ENCODE measurements at regions of chr1 and their contacts with region 1.

Region 1: GRCh38 chr1:54944610-54945544 is 35.6 kb upstream of the TMEM61 start:
- DNase-seq: peak; percentile 36 to 80 (median 59)
- ATAC-seq: peak; percentile 65
- H3K4me3 ChIP-seq: no peak overlapping the region
- H3K4me3 Mint-ChIP-seq: no peak overlapping the region
- H3K27ac ChIP-seq: no peak overlapping the region
- H3K27ac Mint-ChIP-seq: no peak overlapping the region
- H3K4me1 ChIP-seq: no peaks in the 10 kb centered on the region
- H3K4me1 Mint-ChIP-seq: peaks cover 6% of the 10 kb centered on the region
- H3K27me3 ChIP-seq: no peaks in the 10 kb centered on the region
- H3K27me3 Mint-ChIP-seq: peaks cover 5% of the 10 kb centered on the region
- CTCF ChIP-seq: peak; percentile 76

Region 2: DNA sequence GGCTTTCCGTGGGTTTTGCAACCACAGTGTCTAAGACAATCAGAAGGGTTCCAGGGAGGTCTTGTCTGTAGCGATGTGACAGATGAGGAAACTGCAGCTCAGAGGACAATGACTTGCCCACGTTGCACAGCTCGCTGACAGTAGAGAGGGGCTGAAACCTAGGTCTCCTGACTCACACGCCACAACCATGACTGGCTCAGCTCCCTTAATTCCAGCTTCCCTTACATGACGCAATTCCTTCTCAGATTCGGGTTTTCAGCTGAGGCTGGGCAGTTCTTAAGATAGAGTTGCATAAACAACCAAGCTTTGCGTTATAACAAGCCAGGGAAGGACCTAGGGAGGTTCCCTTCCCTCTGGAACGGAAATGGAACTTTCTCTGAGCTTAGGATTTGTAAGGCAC is 94.1 kb before region 1 on chr1:
- CTCF ChIA-PET with region 1: no interaction called
- POLR2A ChIA-PET with region 1: no interaction called
- intact Hi-C with region 1: no loop called
- DNase-seq: no peak
- ATAC-seq: no peak
- H3K4me3 ChIP-seq: no peak overlapping the region
- H3K4me3 Mint-ChIP-seq: no peak overlapping the region
- H3K27ac ChIP-seq: no peak overlapping the region
- H3K27ac Mint-ChIP-seq: no peak overlapping the region
- H3K4me1 ChIP-seq: no peaks in the 10 kb centered on the region
- H3K4me1 Mint-ChIP-seq: no peaks in the 10 kb centered on the region
- H3K27me3 ChIP-seq: no peaks in the 10 kb centered on the region
- H3K27me3 Mint-ChIP-seq: no peaks in the 10 kb centered on the region
- CTCF ChIP-seq: no peak

Region 3: GRCh38 chr1:54904476-54905048 is 40.3 kb before region 1 on chr1:
- CTCF ChIA-PET with region 1: no interaction called
- POLR2A ChIA-PET with region 1: no interaction called
- intact Hi-C with region 1: no loop called
- DNase-seq: no peak
- ATAC-seq: no peak
- H3K4me3 ChIP-seq: no peak overlapping the region
- H3K4me3 Mint-ChIP-seq: no peak overlapping the region
- H3K27ac ChIP-seq: no peak overlapping the region
- H3K27ac Mint-ChIP-seq: no peak overlapping the region
- H3K4me1 ChIP-seq: no peaks in the 10 kb centered on the region
- H3K4me1 Mint-ChIP-seq: no peaks in the 10 kb centered on the region
- H3K27me3 ChIP-seq: no peaks in the 10 kb centered on the region
- H3K27me3 Mint-ChIP-seq: peaks cover 13% of the 10 kb centered on the region
- CTCF ChIP-seq: no peak

Region 4: GRCh38 chr1:54927472-54928240 is 17.2 kb before region 1 on chr1:
- CTCF ChIA-PET with region 1: interaction called, 37 read pairs
- POLR2A ChIA-PET with region 1: no interaction called
- intact Hi-C with region 1: no loop called
- DNase-seq: no peak
- ATAC-seq: no peak
- H3K4me3 ChIP-seq: no peak overlapping the region
- H3K4me3 Mint-ChIP-seq: no peak overlapping the region
- H3K27ac ChIP-seq: no peak overlapping the region
- H3K27ac Mint-ChIP-seq: no peak overlapping the region
- H3K4me1 ChIP-seq: no peaks in the 10 kb centered on the region
- H3K4me1 Mint-ChIP-seq: no peaks in the 10 kb centered on the region
- H3K27me3 ChIP-seq: no peaks in the 10 kb centered on the region
- H3K27me3 Mint-ChIP-seq: peaks cover 11% of the 10 kb centered on the region
- CTCF ChIP-seq: no peak

Region 5: DNA sequence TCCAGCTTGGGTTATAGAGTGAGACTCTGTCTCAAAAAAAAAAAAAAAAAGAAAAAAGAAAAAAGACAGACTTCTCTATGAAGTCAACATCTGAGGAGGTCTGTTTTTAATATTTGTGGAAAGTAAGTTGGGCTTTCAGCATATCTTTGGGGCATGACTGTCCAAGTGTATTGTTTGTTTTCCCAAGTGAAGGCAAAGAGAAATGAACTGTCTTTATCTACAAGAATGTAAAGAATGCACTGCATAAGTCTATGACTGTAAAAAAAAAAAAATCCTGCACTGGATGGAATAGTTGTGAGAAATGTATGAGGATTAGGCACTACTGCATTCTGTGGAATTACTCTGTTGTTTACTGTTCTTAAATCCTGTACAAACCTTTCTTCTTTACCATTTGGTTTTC is 10.0 kb before region 1 on chr1:
- CTCF ChIA-PET with region 1: interaction called, 37 read pairs
- POLR2A ChIA-PET with region 1: no interaction called
- intact Hi-C with region 1: no loop called
- DNase-seq: no peak
- ATAC-seq: no peak
- H3K4me3 ChIP-seq: no peak overlapping the region
- H3K4me3 Mint-ChIP-seq: no peak overlapping the region
- H3K27ac ChIP-seq: no peak overlapping the region
- H3K27ac Mint-ChIP-seq: no peak overlapping the region
- H3K4me1 ChIP-seq: peaks cover 9% of the 10 kb centered on the region
- H3K4me1 Mint-ChIP-seq: peaks cover 10% of the 10 kb centered on the region
- H3K27me3 ChIP-seq: no peaks in the 10 kb centered on the region
- H3K27me3 Mint-ChIP-seq: peaks cover 21% of the 10 kb centered on the region
- CTCF ChIP-seq: no peak

Region 6: DNA sequence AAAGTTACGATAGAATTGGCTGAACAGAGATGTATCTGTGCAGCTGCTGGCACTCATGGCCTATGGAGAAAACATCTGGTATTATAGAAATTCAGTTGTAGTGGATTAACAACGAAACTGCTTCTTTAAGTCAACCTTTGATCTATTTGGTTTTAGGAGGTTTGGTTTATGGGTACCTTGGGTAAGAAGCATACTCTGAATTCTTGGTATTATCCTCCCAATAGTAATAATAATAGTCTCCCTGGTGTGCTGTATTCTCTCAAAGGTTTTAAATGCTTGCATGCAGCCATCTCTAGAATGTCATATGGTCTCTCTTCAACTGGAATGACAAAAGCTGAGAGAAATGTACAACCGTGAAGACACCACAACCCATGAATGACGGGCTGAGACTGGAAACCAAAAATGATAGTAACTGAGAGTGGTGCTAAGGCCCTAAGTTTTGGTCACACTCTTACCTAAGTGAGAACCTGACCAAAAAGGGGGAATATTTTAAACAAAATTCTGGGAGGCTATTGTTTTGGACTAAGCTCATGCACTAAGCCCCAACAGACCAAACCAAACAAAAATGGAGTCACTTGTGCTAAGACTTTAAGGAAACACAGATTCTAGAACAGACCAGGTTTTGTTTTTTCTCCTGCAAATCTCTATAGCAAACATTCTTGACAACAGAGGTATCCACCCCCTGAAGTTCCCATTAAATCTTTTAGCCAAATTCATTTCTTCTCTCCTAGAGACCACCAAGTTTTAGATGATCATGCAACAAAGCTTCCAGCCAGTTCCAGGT is 17.9 kb after region 1 on chr1:
- CTCF ChIA-PET with region 1: interaction called, 12 read pairs
- POLR2A ChIA-PET with region 1: no interaction called
- intact Hi-C with region 1: no loop called
- DNase-seq: no peak
- ATAC-seq: no peak
- H3K4me3 ChIP-seq: no peak overlapping the region
- H3K4me3 Mint-ChIP-seq: no peak overlapping the region
- H3K27ac ChIP-seq: no peak overlapping the region
- H3K27ac Mint-ChIP-seq: no peak overlapping the region
- H3K4me1 ChIP-seq: no peaks in the 10 kb centered on the region
- H3K4me1 Mint-ChIP-seq: peaks cover 4% of the 10 kb centered on the region
- H3K27me3 ChIP-seq: no peaks in the 10 kb centered on the region
- H3K27me3 Mint-ChIP-seq: peaks cover 15% of the 10 kb centered on the region
- CTCF ChIP-seq: no peak

Region 7: DNA sequence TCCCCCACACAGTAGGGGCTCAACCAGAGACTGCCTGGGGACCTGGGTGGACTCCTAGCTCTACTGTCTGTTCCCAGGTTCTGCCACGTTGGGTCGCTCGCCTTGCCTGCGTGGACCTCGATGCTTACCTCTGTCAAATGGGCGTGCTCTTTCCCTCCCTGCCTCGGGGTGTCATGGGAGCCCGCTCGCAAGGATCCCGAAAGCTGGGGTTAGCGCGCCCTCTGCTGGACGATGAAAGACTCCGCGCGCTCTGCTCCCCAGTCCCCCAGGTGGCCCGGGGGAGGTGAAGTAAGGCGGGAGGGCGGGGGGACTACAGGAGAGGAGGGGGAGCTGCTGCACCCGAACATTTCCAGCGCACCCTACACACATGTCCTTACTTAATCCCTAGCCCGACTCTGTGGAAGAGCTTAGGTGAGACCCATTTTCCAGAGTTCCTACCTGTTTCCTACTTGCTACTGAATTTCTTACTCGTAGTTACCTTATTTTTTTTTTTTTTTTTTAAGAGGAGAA is 51.5 kb after region 1 on chr1:
- CTCF ChIA-PET with region 1: interaction called, 67 read pairs
- POLR2A ChIA-PET with region 1: interaction called, 7 read pairs
- intact Hi-C with region 1: loop called (anchors 1 kb)
- DNase-seq: peak; percentile 58 to 85 (median 76)
- ATAC-seq: peak; percentile 73
- H3K4me3 ChIP-seq: peak overlapping the region; percentile 12 to 13
- H3K4me3 Mint-ChIP-seq: peak overlapping the region; percentile 59
- H3K27ac ChIP-seq: peak overlapping the region in 1 of 2 experiments; percentile 25
- H3K27ac Mint-ChIP-seq: peak overlapping the region; percentile 35
- H3K4me1 ChIP-seq: peaks cover 20% of the 10 kb centered on the region
- H3K4me1 Mint-ChIP-seq: peaks cover 24% of the 10 kb centered on the region
- H3K27me3 ChIP-seq: peaks cover 6 to 21% of the 10 kb centered on the region in 2 experiments
- H3K27me3 Mint-ChIP-seq: peaks cover 43% of the 10 kb centered on the region
- CTCF ChIP-seq: peak; percentile 55

Region 8: GRCh38 chr1:55021965-55022546 is 77.2 kb after region 1 on chr1:
- CTCF ChIA-PET with region 1: interaction called, 16 read pairs
- POLR2A ChIA-PET with region 1: no interaction called
- intact Hi-C with region 1: loop called in 1 of 2 experiments (anchors 2 kb)
- DNase-seq: peak; percentile 25 to 73 (median 55)
- ATAC-seq: peak; percentile 68
- H3K4me3 ChIP-seq: no peak overlapping the region
- H3K4me3 Mint-ChIP-seq: no peak overlapping the region
- H3K27ac ChIP-seq: no peak overlapping the region
- H3K27ac Mint-ChIP-seq: no peak overlapping the region
- H3K4me1 ChIP-seq: no peaks in the 10 kb centered on the region
- H3K4me1 Mint-ChIP-seq: no peaks in the 10 kb centered on the region
- H3K27me3 ChIP-seq: no peaks in the 10 kb centered on the region
- H3K27me3 Mint-ChIP-seq: peaks cover 12% of the 10 kb centered on the region
- CTCF ChIP-seq: peak; percentile 61